GM12878 (cell line): ENCODE measurements at regions of chr13 and their contacts with region 1.

Region 1: GRCh38 chr13:39616087-39616694 is 13.2 kb upstream of the LHFPL6 start:
- DNase-seq: no peak
- ATAC-seq: peak; percentile 94
- H3K4me3 ChIP-seq: no peak overlapping the region
- H3K27ac ChIP-seq: no peak overlapping the region
- H3K4me1 ChIP-seq: no peaks in the 10 kb centered on the region
- H3K27me3 ChIP-seq: no peaks in the 10 kb centered on the region
- CTCF ChIP-seq: peak; percentile 80 to 93 (median 84)
- EP300 ChIP-seq: no peak
- POLR2A ChIP-seq: no peak
- RAD21 ChIP-seq: peak; percentile 73

Region 2: GRCh38 chr13:39051157-39051556 is 565.0 kb before region 1 on chr13:
- CTCF ChIA-PET with region 1: interaction called, 20 read pairs
- POLR2A ChIA-PET with region 1: no interaction called
- RAD21 ChIA-PET with region 1: interaction called, 21 read pairs
- SMC1A ChIA-PET with region 1: interaction called, 11 read pairs
- in situ Hi-C with region 1: loop called (anchors 5 kb)
- intact Hi-C with region 1: loop called (anchors 1 kb)
- DNase-seq: no peak
- ATAC-seq: peak; percentile 54
- H3K4me3 ChIP-seq: no peak overlapping the region
- H3K27ac ChIP-seq: no peak overlapping the region
- H3K4me1 ChIP-seq: no peaks in the 10 kb centered on the region
- H3K27me3 ChIP-seq: no peaks in the 10 kb centered on the region
- CTCF ChIP-seq: peak; percentile 27 to 55 (median 31); a peak in 4 of 6 replicates
- EP300 ChIP-seq: no peak
- POLR2A ChIP-seq: no peak
- RAD21 ChIP-seq: peak; percentile 76

Region 3: GRCh38 chr13:39263033-39263432 is 353.2 kb before region 1 on chr13:
- CTCF ChIA-PET with region 1: interaction called, 34 read pairs
- POLR2A ChIA-PET with region 1: no interaction called
- RAD21 ChIA-PET with region 1: interaction called, 26 read pairs
- SMC1A ChIA-PET with region 1: interaction called, 23 read pairs
- in situ Hi-C with region 1: no loop called
- intact Hi-C with region 1: no loop called
- DNase-seq: peak; percentile 9
- ATAC-seq: peak; percentile 89
- H3K4me3 ChIP-seq: no peak overlapping the region
- H3K27ac ChIP-seq: no peak overlapping the region
- H3K4me1 ChIP-seq: no peaks in the 10 kb centered on the region
- H3K27me3 ChIP-seq: no peaks in the 10 kb centered on the region
- CTCF ChIP-seq: peak; percentile 60 to 71 (median 70)
- EP300 ChIP-seq: no peak
- POLR2A ChIP-seq: no peak
- RAD21 ChIP-seq: peak; percentile 74

Region 4: GRCh38 chr13:39406688-39407087 is 209.5 kb before region 1 on chr13:
- CTCF ChIA-PET with region 1: interaction called, 8 read pairs
- POLR2A ChIA-PET with region 1: no interaction called
- RAD21 ChIA-PET with region 1: interaction called, 4 read pairs
- SMC1A ChIA-PET with region 1: interaction called, 12 read pairs
- in situ Hi-C with region 1: no loop called
- intact Hi-C with region 1: no loop called
- DNase-seq: peak; percentile 9
- ATAC-seq: peak; percentile 93
- H3K4me3 ChIP-seq: no peak overlapping the region
- H3K27ac ChIP-seq: no peak overlapping the region
- H3K4me1 ChIP-seq: no peaks in the 10 kb centered on the region
- H3K27me3 ChIP-seq: no peaks in the 10 kb centered on the region
- CTCF ChIP-seq: peak in 2 of 3 experiments; percentile 20 to 31; a peak in 1 of 6 replicates
- EP300 ChIP-seq: no peak
- POLR2A ChIP-seq: no peak
- RAD21 ChIP-seq: no peak

Region 5: GRCh38 chr13:39422845-39423565 is 193.2 kb before region 1 on chr13:
- CTCF ChIA-PET with region 1: interaction called, 88 read pairs
- POLR2A ChIA-PET with region 1: no interaction called
- RAD21 ChIA-PET with region 1: interaction called, 25 read pairs
- SMC1A ChIA-PET with region 1: interaction called, 10 read pairs
- in situ Hi-C with region 1: no loop called
- intact Hi-C with region 1: no loop called
- DNase-seq: no peak
- ATAC-seq: no peak
- H3K4me3 ChIP-seq: no peak overlapping the region
- H3K27ac ChIP-seq: no peak overlapping the region
- H3K4me1 ChIP-seq: no peaks in the 10 kb centered on the region
- H3K27me3 ChIP-seq: no peaks in the 10 kb centered on the region
- CTCF ChIP-seq: no peak
- EP300 ChIP-seq: no peak
- POLR2A ChIP-seq: no peak
- RAD21 ChIP-seq: no peak

Region 6: GRCh38 chr13:39602614-39603366 is 13.4 kb before region 1 on chr13 and contains the start of gene LHFPL6:
- CTCF ChIA-PET with region 1: interaction called, 26 read pairs
- POLR2A ChIA-PET with region 1: interaction called, 3 read pairs
- RAD21 ChIA-PET with region 1: interaction called, 5 read pairs
- SMC1A ChIA-PET with region 1: interaction called, 10 read pairs
- in situ Hi-C with region 1: no loop called
- intact Hi-C with region 1: no loop called
- DNase-seq: no peak
- ATAC-seq: peak; percentile 96
- H3K4me3 ChIP-seq: peak within 1 kb of the TSS; percentile 58
- H3K27ac ChIP-seq: no peak within 1 kb of the TSS
- H3K4me1 ChIP-seq: no peaks in the 10 kb centered on the region; the same call in 1 of the 2 replicates
- H3K27me3 ChIP-seq: peaks cover 0 to 5% of the 10 kb centered on the region in 2 experiments; a peak in 3 of 4 replicates
- CTCF ChIP-seq: peak; percentile 9 to 23 (median 11); a peak in 3 of 6 replicates
- EP300 ChIP-seq: no peak
- POLR2A ChIP-seq: peak; percentile 53
- RAD21 ChIP-seq: no peak
- polyA plus RNA-seq, gene LHFPL6: 0.11 to 0.20 TPM

Region 7: DNA sequence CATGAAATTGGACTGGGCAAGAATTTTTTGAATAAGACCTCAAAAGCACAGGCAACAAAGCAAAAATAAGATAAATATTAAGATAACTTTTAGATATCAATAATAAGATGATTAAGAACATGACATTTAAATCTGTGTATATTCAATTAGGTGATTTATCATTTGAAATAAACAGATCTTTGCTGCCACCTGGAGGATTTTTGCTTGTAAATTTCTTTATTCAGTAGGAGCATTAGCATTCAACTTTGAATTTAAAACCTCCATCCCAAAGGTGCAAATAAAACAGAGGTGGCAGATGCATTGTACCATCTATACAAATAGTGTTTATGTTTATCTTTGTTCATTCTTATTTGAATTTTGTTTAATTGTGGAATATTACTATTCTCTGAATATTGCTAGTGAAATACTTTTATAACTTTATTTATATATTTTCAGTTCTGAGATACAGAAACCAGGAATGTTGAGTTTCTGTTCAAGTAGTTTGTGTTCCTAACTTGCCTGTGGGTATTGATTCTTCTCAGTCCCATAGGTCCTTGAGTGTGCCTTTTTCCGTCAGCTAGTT is 60.2 kb after region 1 on chr13:
- CTCF ChIA-PET with region 1: interaction called, 15 read pairs
- POLR2A ChIA-PET with region 1: no interaction called
- RAD21 ChIA-PET with region 1: interaction called, 5 read pairs
- SMC1A ChIA-PET with region 1: interaction called, 15 read pairs
- in situ Hi-C with region 1: no loop called
- intact Hi-C with region 1: no loop called
- DNase-seq: no peak
- ATAC-seq: peak; percentile 48; the same call in 2 of the 3 replicates
- H3K4me3 ChIP-seq: no peak overlapping the region
- H3K27ac ChIP-seq: no peak overlapping the region
- H3K4me1 ChIP-seq: no peaks in the 10 kb centered on the region
- H3K27me3 ChIP-seq: no peaks in the 10 kb centered on the region
- CTCF ChIP-seq: peak; percentile 21 to 50 (median 38); a peak in 4 of 6 replicates
- EP300 ChIP-seq: no peak
- POLR2A ChIP-seq: no peak
- RAD21 ChIP-seq: peak; percentile 35; the same call in 1 of the 2 replicates

Region 8: GRCh38 chr13:39699274-39699673 is 83.1 kb after region 1 on chr13:
- CTCF ChIA-PET with region 1: no interaction called
- POLR2A ChIA-PET with region 1: no interaction called
- RAD21 ChIA-PET with region 1: no interaction called
- SMC1A ChIA-PET with region 1: no interaction called
- in situ Hi-C with region 1: no loop called
- intact Hi-C with region 1: no loop called
- DNase-seq: no peak
- ATAC-seq: no peak
- H3K4me3 ChIP-seq: no peak overlapping the region
- H3K27ac ChIP-seq: no peak overlapping the region
- H3K4me1 ChIP-seq: no peaks in the 10 kb centered on the region; the same call in 1 of the 2 replicates
- H3K27me3 ChIP-seq: no peaks in the 10 kb centered on the region
- CTCF ChIP-seq: no peak
- EP300 ChIP-seq: no peak
- POLR2A ChIP-seq: no peak
- RAD21 ChIP-seq: no peak

Region 9: GRCh38 chr13:40221460-40222201 is 605.4 kb after region 1 on chr13:
- CTCF ChIA-PET with region 1: no interaction called
- POLR2A ChIA-PET with region 1: no interaction called
- RAD21 ChIA-PET with region 1: no interaction called
- SMC1A ChIA-PET with region 1: no interaction called
- in situ Hi-C with region 1: no loop called
- intact Hi-C with region 1: no loop called
- DNase-seq: no peak
- ATAC-seq: peak; percentile 63
- H3K4me3 ChIP-seq: no peak overlapping the region
- H3K27ac ChIP-seq: no peak overlapping the region
- H3K4me1 ChIP-seq: no peaks in the 10 kb centered on the region
- H3K27me3 ChIP-seq: no peaks in the 10 kb centered on the region
- CTCF ChIP-seq: no peak
- EP300 ChIP-seq: no peak
- POLR2A ChIP-seq: no peak
- RAD21 ChIP-seq: no peak

Region 10: GRCh38 chr13:40336228-40337221 is 720.3 kb after region 1 on chr13:
- CTCF ChIA-PET with region 1: no interaction called
- POLR2A ChIA-PET with region 1: no interaction called
- RAD21 ChIA-PET with region 1: no interaction called
- SMC1A ChIA-PET with region 1: no interaction called
- in situ Hi-C with region 1: no loop called
- intact Hi-C with region 1: no loop called
- DNase-seq: no peak
- ATAC-seq: no peak
- H3K4me3 ChIP-seq: no peak overlapping the region
- H3K27ac ChIP-seq: no peak overlapping the region
- H3K4me1 ChIP-seq: no peaks in the 10 kb centered on the region
- H3K27me3 ChIP-seq: no peaks in the 10 kb centered on the region
- CTCF ChIP-seq: no peak
- EP300 ChIP-seq: no peak
- POLR2A ChIP-seq: no peak
- RAD21 ChIP-seq: no peak